HepG2 (cell line): ENCODE measurements at regions of chr5 and their contacts with region 1.

Region 1: DNA sequence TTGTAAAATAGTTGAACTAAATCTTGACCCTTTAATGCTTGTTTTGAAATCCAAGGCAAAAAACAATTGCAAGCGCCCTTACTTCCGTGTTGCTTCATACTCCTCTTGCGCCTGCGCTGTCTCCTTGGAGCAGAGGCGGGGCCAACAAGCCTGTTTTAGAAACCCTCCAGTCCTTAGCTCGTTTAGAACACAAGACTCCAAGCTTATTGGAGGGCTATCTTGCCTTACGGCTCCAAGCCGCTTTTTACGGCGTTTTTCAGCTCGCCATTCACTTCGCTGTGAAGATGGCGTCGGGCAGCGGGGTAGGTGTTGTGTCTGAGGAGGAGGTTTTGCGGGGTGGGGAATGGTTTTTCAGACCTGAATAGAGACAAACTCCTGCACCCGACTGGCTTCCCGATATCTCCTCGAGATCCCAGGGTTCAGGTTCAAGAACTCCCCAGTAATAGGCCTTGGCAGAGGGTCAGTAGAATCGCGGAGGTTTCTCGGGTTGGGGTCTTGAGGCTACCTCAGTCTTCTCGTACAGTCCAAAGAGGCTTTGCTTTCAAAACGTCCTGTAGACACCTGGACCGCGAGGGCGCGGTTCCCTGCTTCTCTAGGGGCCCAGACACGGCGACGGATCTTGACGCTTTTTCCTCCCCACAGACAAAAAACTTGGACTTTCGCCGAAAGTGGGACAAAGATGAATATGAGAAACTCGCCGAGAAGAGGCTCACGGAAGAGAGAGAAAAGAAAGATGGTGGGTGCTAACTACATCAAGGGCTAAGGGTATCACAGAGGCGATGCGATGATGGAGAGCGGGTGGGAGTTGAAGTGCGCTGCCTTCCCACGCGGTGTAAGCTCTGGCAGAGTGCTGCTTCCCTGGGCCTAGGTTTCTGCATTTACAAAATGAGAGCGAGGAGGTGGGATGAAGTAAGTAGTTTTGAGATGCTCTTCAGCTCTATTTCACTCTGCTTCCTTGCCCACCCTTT is at the start of gene ZMAT2:
- DNase-seq: peak; percentile 97
- ATAC-seq: peak; percentile 97
- H3K4me3 ChIP-seq: peak within 1 kb of the TSS; percentile 71 to 94 (median 82)
- H3K27ac ChIP-seq: peak within 1 kb of the TSS; percentile 71
- H3K4me1 ChIP-seq: peaks cover 18% of the 10 kb centered on the region
- H3K27me3 ChIP-seq: no peaks in the 10 kb centered on the region; a peak in 1 of 5 replicates
- CTCF ChIP-seq: no peak
- EP300 ChIP-seq: no peak
- POLR2A ChIP-seq: peak; percentile 72 to 84
- RAD21 ChIP-seq: no peak
- total RNA-seq, gene ZMAT2: 92.8 and 141 TPM in 2 replicates

Region 2: GRCh38 chr5:140632150-140633020 is 68.1 kb before region 1 on chr5:
- CTCF ChIA-PET with region 1: no interaction called
- POLR2A ChIA-PET with region 1: no interaction called
- in situ Hi-C with region 1: no loop called
- intact Hi-C with region 1: no loop called
- DNase-seq: no peak
- ATAC-seq: no peak
- H3K4me3 ChIP-seq: peak overlapping the region in 2 of 3 experiments; percentile 6 to 50; a peak in 1 of 6 replicates
- H3K27ac ChIP-seq: peak overlapping the region; percentile 36
- H3K4me1 ChIP-seq: peaks cover 50% of the 10 kb centered on the region
- H3K27me3 ChIP-seq: no peaks in the 10 kb centered on the region
- CTCF ChIP-seq: no peak
- EP300 ChIP-seq: no peak
- POLR2A ChIP-seq: no peak
- RAD21 ChIP-seq: no peak

Region 3: DNA sequence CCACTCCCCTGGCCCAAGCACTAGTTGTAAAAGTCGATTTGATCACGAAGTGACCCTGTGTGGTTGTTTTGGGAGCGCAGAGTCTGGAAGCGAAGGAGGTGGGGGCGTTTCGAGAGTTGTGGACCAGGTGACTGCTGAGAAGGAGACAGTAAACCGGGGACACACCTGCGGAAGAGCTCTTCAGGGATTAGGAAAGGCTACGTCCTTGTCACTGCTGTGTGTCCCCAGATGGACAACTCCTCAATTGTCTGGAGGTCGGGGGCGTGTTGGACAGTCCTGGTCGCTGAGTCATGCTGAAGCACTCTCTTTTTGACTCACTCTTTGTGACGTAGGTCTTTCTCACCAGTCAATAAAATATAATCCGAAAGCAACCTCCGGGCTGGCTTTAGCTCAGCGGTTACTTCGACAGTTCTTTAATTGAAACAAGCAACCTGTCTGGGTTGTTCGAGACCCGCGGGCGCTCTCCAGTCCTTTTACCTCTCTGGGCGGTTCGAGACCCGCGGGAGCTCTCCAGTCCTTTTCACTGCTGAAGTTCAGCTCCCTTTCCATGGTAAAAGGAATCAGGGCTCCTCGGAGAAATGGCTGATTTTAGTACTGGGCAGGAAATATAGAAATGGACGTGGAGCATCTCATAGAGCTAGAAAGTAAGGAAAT is 10.6 kb after region 1 on chr5:
- CTCF ChIA-PET with region 1: no interaction called
- POLR2A ChIA-PET with region 1: interaction called, 42 read pairs
- in situ Hi-C with region 1: no loop called
- intact Hi-C with region 1: loop called (anchors 1 kb)
- DNase-seq: peak; percentile 98
- ATAC-seq: peak; percentile 94
- H3K4me3 ChIP-seq: peak overlapping the region; percentile 59 to 86 (median 77)
- H3K27ac ChIP-seq: peak overlapping the region; percentile 92
- H3K4me1 ChIP-seq: peaks cover 24% of the 10 kb centered on the region
- H3K27me3 ChIP-seq: no peaks in the 10 kb centered on the region; a peak in 1 of 5 replicates
- CTCF ChIP-seq: no peak
- EP300 ChIP-seq: peak in 1 of 2 experiments; percentile 47; a peak in 1 of 4 replicates
- POLR2A ChIP-seq: peak; percentile 48 to 82
- RAD21 ChIP-seq: 0 out of 2 replicates have a peak, but pooled peaks have one; percentile 7

Region 4: DNA sequence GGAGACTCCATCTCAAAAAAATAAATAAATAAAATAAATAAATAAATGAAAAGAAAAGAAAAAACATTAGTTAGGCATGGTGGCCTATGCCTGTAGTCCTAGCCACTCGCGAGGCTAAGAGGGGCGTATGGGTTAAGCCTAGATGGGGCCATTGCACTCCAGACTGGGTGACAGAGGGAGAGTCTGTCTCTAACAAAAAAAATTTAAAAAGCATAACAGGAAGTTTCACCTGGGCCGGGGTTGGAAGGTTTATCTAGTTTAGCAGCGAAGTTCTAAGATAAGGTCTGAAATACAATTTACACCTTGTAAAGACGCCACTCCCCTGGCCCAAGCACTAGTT is 17.8 kb after region 1 on chr5:
- CTCF ChIA-PET with region 1: no interaction called
- POLR2A ChIA-PET with region 1: interaction called, 19 read pairs
- in situ Hi-C with region 1: no loop called
- intact Hi-C with region 1: no loop called
- DNase-seq: no peak
- ATAC-seq: peak; percentile 2; the same call in 2 of the 3 replicates
- H3K4me3 ChIP-seq: peak overlapping the region; percentile 23 to 64 (median 60); a peak in 5 of 6 replicates
- H3K27ac ChIP-seq: peak overlapping the region; percentile 79
- H3K4me1 ChIP-seq: peaks cover 16% of the 10 kb centered on the region
- H3K27me3 ChIP-seq: no peaks in the 10 kb centered on the region
- CTCF ChIP-seq: no peak
- EP300 ChIP-seq: no peak
- POLR2A ChIP-seq: no peak; a peak in 1 of 4 replicates
- RAD21 ChIP-seq: no peak

Region 5: GRCh38 chr5:140734354-140734753 is 33.9 kb after region 1 on chr5:
- CTCF ChIA-PET with region 1: no interaction called
- POLR2A ChIA-PET with region 1: no interaction called
- in situ Hi-C with region 1: no loop called
- intact Hi-C with region 1: no loop called
- DNase-seq: peak; percentile 43
- ATAC-seq: peak; percentile 88
- H3K4me3 ChIP-seq: no peak overlapping the region
- H3K27ac ChIP-seq: no peak overlapping the region
- H3K4me1 ChIP-seq: no peaks in the 10 kb centered on the region
- H3K27me3 ChIP-seq: no peaks in the 10 kb centered on the region; a peak in 1 of 5 replicates
- CTCF ChIP-seq: peak; percentile 76
- EP300 ChIP-seq: no peak
- POLR2A ChIP-seq: no peak
- RAD21 ChIP-seq: peak; percentile 44; the same call in 1 of the 2 replicates